ENCODE measurements at regions of chr5 and their contacts with region 1.

Region 1: DNA sequence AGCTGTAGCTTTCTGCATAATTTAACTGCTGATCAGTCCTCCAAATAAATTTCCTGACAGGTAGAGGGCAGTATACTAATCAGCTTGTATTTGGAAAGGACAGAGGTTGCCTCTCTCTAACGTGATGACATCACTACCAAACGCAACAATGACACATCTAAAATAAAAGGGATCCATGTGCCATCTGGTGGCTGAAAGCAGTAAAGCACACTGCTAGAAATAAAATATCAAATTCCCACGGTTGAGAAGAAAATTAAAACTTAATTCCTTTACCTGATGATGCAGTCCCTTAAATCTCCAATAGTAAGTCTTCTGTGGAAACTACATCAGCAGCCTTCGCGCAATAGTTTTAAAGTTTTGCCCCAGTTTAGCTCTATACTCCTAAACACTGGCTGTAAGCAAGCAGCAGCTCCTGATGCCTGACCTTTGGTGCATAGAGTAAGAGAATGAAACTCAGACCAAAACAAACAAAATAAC is 54.5 kb downstream of the DIAPH1 start:
- DNase-seq: peak; percentile 97
- H3K4me3 ChIP-seq: no peak overlapping the region
- H3K27ac ChIP-seq: peak overlapping the region; percentile 77
- H3K4me1 ChIP-seq: peaks cover 25% of the 10 kb centered on the region
- H3K27me3 ChIP-seq: no peaks in the 10 kb centered on the region
- CTCF ChIP-seq: peak; percentile 98

Region 2: GRCh38 chr5:140840978-140841959 is 723.0 kb before region 1 on chr5 and contains the start of gene PCDHA8:
- CTCF ChIA-PET with region 1: no interaction called
- POLR2A ChIA-PET with region 1: no interaction called
- intact Hi-C with region 1: no loop called
- DNase-seq: peak; percentile 76
- H3K4me3 ChIP-seq: peak within 1 kb of the TSS; percentile 52
- H3K27ac ChIP-seq: no peak within 1 kb of the TSS
- H3K4me1 ChIP-seq: no peaks in the 10 kb centered on the region
- H3K27me3 ChIP-seq: no peaks in the 10 kb centered on the region
- CTCF ChIP-seq: peak; percentile 71
- total RNA-seq, gene PCDHA8: 1.4 and 1.5 TPM in 2 replicates

Region 3: GRCh38 chr5:141182248-141182647 is 382.0 kb before region 1 on chr5 and contains the start of gene PCDHB16:
- CTCF ChIA-PET with region 1: interaction called, 10 read pairs
- POLR2A ChIA-PET with region 1: no interaction called
- intact Hi-C with region 1: no loop called
- DNase-seq: peak; percentile 90
- H3K4me3 ChIP-seq: peak within 1 kb of the TSS; percentile 51
- H3K27ac ChIP-seq: peak within 1 kb of the TSS; percentile 75
- H3K4me1 ChIP-seq: no peaks in the 10 kb centered on the region
- H3K27me3 ChIP-seq: no peaks in the 10 kb centered on the region
- CTCF ChIP-seq: peak; percentile 87
- total RNA-seq, gene PCDHB16: 11.3 and 12.8 TPM in 2 replicates

Region 4: GRCh38 chr5:141223112-141223783 is 341.0 kb before region 1 on chr5 and contains the start of gene PCDHB14:
- CTCF ChIA-PET with region 1: interaction called, 47 read pairs
- POLR2A ChIA-PET with region 1: interaction called, 4 read pairs
- intact Hi-C with region 1: loop called (anchors 1 kb)
- DNase-seq: peak; percentile 95
- H3K4me3 ChIP-seq: peak within 1 kb of the TSS; percentile 44
- H3K27ac ChIP-seq: peak within 1 kb of the TSS; percentile 64
- H3K4me1 ChIP-seq: no peaks in the 10 kb centered on the region
- H3K27me3 ChIP-seq: no peaks in the 10 kb centered on the region
- CTCF ChIP-seq: peak; percentile 67
- total RNA-seq, gene PCDHB14: 6.9 and 7.4 TPM in 2 replicates

Region 5: DNA sequence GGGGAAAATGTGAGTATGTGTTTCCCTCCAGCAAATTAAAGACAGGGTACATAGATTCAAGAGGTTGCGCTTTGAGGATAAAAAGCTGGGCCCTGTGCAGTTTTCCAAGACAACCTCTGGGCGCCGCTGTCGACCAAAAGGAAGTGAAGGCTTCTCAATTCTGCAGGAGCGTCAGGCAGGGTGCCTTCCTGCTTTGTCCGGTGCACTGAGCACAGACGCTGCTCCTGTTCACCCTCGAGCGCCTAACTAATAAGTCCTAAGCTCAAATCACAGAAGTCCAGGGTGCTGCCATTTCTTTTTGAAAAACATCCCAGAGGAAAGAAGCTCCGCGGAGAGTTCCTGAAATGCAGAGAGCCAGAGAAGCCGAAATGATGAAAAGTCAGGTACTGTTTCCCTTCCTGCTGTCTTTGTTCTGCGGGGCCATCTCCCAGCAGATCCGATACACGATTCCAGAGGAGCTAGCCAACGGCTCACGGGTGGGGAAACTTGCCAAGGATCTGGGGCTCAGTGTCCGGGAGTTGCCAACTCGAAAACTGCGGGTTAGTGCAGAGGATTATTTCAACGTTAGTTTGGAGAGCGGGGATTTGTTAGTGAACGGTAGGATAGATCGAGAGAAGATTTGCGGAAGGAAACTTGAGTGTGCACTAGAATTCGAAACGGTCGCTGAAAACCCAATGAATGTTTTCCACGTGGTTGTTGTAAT is 214.2 kb before region 1 on chr5 and contains the start of gene PCDHGB1:
- CTCF ChIA-PET with region 1: interaction called, 12 read pairs
- POLR2A ChIA-PET with region 1: no interaction called
- intact Hi-C with region 1: loop called (anchors 5 kb)
- DNase-seq: peak; percentile 87
- H3K4me3 ChIP-seq: peak within 1 kb of the TSS; percentile 24
- H3K27ac ChIP-seq: peak within 1 kb of the TSS; percentile 12
- H3K4me1 ChIP-seq: no peaks in the 10 kb centered on the region
- H3K27me3 ChIP-seq: no peaks in the 10 kb centered on the region
- CTCF ChIP-seq: peak; percentile 76
- total RNA-seq, gene PCDHGB1: 7.6 TPM in 2 replicates

Region 6: GRCh38 chr5:141373673-141374317 is 190.5 kb before region 1 on chr5 and contains the start of gene PCDHGA6:
- CTCF ChIA-PET with region 1: interaction called, 11 read pairs
- POLR2A ChIA-PET with region 1: no interaction called
- intact Hi-C with region 1: loop called (anchors 1 kb)
- DNase-seq: peak; percentile 70
- H3K4me3 ChIP-seq: peak within 1 kb of the TSS; percentile 51
- H3K27ac ChIP-seq: peak within 1 kb of the TSS; percentile 59
- H3K4me1 ChIP-seq: no peaks in the 10 kb centered on the region
- H3K27me3 ChIP-seq: no peaks in the 10 kb centered on the region
- CTCF ChIP-seq: peak; percentile 69
- total RNA-seq, gene PCDHGA6: 20.2 and 21.6 TPM in 2 replicates

Region 7: GRCh38 chr5:141420855-141421496 is 143.3 kb before region 1 on chr5 and contains the start of gene PCDHGA11:
- CTCF ChIA-PET with region 1: interaction called, 15 read pairs
- POLR2A ChIA-PET with region 1: no interaction called
- intact Hi-C with region 1: no loop called
- DNase-seq: peak; percentile 85
- H3K4me3 ChIP-seq: peak within 1 kb of the TSS; percentile 53
- H3K27ac ChIP-seq: peak within 1 kb of the TSS; percentile 77
- H3K4me1 ChIP-seq: no peaks in the 10 kb centered on the region
- H3K27me3 ChIP-seq: no peaks in the 10 kb centered on the region
- CTCF ChIP-seq: peak; percentile 69
- total RNA-seq, gene PCDHGA11: 34.9 and 35.5 TPM in 2 replicates